Activated CD4-positive, alpha-beta T cell treated with anti-CD3 and anti-CD28 coated beads, Interleukin-2, amount 10 ng/mL, durations not matched to agents 7 days and 5 days (primary cell): ENCODE measurements at regions of chr1 and their contacts with region 1.

Region 1: DNA sequence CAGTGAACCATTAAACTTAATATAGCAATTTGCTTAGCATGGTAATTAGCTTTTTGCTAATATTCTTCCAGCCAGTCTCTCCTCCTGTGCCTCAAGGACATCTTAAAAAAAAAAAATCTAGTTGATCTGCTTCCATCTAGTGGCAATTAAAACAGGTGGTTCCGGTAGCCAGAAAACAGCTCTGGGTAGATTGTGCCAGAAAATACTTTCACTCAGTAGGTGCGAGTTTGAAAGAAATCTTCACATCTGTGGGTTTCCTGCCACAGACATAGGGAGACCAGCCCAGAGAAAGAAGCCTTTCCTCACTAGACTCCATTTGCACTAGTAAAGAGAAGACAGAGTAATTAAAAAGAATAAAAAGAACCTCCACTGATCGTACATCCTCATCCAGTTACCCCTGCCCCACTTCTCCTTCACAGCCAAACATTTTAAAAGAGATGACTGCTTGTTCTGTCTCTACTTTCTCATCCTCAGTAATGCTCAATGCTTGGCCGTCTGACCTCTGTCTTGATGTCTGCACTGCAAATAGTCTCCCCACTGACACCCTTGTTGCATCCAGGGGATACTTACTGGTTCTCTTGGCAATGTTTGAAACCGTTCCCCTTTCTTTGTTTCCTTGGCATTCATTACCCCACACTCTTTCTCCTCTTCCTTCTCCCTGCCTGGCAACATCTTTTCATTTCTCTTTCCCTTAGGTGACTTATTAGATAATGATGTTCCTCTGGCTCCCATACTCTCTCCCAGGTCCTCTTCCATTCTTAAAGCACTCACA is 16.9 kb downstream of the SELL start:
- DNase-seq: peak; percentile 79
- H3K4me3 Mint-ChIP-seq: peak overlapping the region; percentile 49
- H3K27ac Mint-ChIP-seq: peak overlapping the region; percentile 91
- H3K4me1 Mint-ChIP-seq: peaks cover 96% of the 10 kb centered on the region
- H3K27me3 Mint-ChIP-seq: no peaks in the 10 kb centered on the region

Region 2: DNA sequence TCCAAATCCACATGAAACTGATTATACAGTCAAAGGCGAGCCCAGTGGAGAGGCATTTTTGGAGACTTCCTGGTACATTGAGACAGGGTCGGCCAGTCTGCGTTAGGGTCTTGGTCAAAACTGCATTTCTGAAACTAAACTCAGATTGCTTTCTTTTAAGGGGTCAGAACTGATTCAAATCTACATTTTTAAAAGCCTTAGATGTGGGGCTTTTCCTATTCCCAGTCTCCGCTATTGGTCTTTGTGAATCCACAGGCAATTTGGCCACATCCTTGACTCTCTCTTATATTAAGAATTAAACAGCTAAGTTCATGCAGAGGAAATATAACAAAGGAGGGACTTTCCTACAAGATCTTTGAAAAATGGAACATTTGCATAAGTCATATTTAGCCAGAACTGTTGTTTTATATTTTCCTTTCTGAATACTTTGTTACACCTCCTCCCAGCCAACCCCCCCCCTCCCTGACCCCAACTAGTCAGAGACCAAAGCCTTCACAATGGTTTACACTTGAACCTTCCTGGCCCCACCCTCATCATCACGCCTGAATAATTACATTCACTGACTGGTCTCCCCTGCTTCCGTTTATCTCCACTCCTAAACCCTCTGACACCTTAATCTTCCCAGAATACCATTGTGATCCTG is 14.0 kb before region 1 on chr1:
- CTCF ChIA-PET with region 1: interaction called, 12 read pairs
- POLR2A ChIA-PET with region 1: interaction called, 6 read pairs
- DNase-seq: no peak
- H3K4me3 Mint-ChIP-seq: no peak overlapping the region
- H3K27ac Mint-ChIP-seq: peak overlapping the region; percentile 72
- H3K4me1 Mint-ChIP-seq: peaks cover 59% of the 10 kb centered on the region
- H3K27me3 Mint-ChIP-seq: no peaks in the 10 kb centered on the region

Region 3: DNA sequence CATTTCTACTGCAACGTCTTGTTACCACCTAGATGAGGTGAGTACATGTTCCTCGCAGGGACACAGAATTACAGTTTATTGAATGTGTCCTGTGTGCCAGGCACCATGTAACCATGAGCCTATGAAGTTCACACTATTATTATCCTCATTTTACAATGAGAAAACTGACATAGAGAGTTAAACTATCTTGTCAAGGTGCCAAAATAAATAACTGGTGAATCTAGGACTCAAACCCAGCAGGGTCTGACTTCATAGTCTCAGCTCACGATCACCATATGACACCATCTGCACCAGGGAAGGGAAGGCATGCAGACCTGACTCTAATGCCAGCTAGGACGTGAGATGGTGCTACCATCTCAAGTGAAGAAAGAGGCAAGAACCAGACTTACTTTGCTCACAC is 37.0 kb after region 1 on chr1:
- CTCF ChIA-PET with region 1: no interaction called
- POLR2A ChIA-PET with region 1: no interaction called
- DNase-seq: no peak
- H3K4me3 Mint-ChIP-seq: no peak overlapping the region
- H3K27ac Mint-ChIP-seq: no peak overlapping the region
- H3K4me1 Mint-ChIP-seq: no peaks in the 10 kb centered on the region
- H3K27me3 Mint-ChIP-seq: peaks cover 12% of the 10 kb centered on the region

Region 4: DNA sequence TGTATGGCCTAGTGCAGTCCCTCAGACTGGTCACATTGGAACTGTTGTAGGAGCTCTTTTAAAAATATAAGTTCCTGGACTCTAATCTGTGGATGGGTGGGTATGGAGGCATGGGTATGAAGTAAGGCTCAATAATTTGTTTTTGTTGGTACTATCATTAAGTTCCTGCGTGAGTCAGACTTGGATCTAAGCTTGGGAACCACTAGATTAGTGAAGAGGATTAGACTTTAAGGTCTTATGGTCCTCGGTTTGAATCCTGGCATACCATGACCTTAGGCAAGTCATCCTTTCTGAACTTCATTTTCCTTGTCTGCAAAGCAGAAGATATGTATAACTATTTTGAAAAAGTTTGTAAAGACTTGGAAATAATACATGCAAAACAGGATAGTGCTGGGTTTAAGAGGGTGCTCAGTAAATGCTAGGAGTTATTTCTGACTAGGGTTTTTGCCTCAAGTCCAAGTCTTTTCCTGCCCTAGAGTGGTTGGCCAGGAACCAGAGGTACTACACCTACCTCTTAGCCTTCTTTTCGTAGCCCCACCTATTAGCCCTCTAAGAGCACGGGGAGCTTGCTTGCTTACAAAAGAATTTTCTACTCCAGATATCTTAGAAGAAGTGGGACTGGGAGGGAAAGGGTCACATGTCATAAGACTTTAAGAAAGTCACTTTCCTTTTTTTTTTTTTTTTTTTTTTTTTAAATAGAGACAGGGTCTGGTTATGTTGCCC is 138.8 kb after region 1 on chr1:
- CTCF ChIA-PET with region 1: no interaction called
- POLR2A ChIA-PET with region 1: no interaction called
- DNase-seq: no peak
- H3K4me3 Mint-ChIP-seq: no peak overlapping the region
- H3K27ac Mint-ChIP-seq: no peak overlapping the region
- H3K4me1 Mint-ChIP-seq: no peaks in the 10 kb centered on the region
- H3K27me3 Mint-ChIP-seq: no peaks in the 10 kb centered on the region